ENCODE measurements at regions of chr1 and their contacts with region 1.

Region 1: GRCh38 chr1:48793863-48794262 is 17.2 kb upstream of the BEND5 start:
- DNase-seq: no peak
- H3K4me3 ChIP-seq: no peak overlapping the region
- CTCF ChIP-seq: no peak

Region 2: GRCh38 chr1:48697066-48697707 is 96.7 kb before region 1 on chr1:
- in situ Hi-C with region 1: loop called (anchors 5 kb)
- DNase-seq: no peak
- H3K4me3 ChIP-seq: no peak overlapping the region
- CTCF ChIP-seq: peak; percentile 96

Region 3: DNA sequence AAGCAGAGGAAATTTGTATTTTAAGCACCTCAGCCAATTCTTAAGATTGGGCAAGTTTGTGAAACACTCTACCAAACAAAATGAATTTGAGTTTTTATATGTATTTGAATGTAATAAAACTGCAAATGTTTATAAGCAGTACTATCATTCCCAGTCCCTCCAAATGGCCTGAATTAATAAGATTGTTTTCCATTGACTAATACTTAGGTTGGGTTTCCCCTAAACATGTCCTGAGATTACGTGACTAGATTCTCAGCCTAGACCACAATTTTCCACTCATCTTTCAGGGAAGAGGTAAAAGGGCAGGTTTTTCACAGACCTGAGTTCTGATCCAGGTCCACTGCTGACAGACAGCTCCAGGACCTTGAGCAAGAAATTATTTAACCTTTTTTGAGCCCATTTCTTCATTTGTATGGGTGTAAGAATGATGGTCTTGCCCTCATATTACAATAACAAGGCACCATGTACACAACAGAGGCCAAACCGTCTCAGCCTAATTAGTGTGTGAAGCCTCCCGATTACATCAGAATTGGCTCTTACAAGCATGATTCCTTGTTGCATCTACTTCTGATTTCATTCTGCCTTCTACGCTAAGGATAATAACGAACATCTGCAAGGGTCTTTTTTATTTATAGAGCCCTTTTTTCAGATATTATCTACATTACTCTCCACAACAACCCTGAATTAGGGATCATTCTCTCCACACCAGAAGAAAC is 68.4 kb before region 1 on chr1:
- in situ Hi-C with region 1: no loop called
- DNase-seq: no peak
- H3K4me3 ChIP-seq: no peak overlapping the region
- CTCF ChIP-seq: no peak

Measured in astrocyte of the cerebellum (primary cell).